ENCODE measurements at regions of chr10 and their contacts with region 1.

Region 1: GRCh38 chr10:93916257-93917063 is 22.7 kb downstream of the SLC35G1 start:
- DNase-seq: no peak
- ATAC-seq: peak; percentile 61
- H3K4me3 Mint-ChIP-seq: peak overlapping the region; percentile 41
- H3K27ac Mint-ChIP-seq: no peak overlapping the region
- H3K4me1 Mint-ChIP-seq: peaks cover 11% of the 10 kb centered on the region
- H3K27me3 Mint-ChIP-seq: no peaks in the 10 kb centered on the region
- CTCF ChIP-seq: no peak

Region 2: DNA sequence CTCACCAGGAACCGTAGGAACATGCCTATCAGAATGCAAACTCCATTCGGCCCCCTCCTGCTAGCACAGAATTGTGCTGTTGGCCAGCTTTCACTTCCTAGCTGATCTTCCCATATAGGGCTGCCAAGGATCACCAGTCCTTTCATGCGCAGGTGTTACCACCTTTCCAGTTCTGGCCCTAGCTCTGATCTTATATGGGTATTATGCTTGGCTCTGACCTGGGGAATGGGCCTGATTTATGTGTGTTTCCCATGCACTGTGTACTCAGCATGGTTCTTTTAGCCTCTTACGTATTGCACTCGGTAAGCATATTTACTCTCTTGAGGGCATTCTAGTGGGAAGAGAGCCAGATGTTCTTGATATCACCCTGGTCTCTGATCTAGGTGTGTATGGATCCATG is 11.6 kb before region 1 on chr10:
- CTCF ChIA-PET with region 1: interaction called, 22 read pairs
- POLR2A ChIA-PET with region 1: no interaction called
- DNase-seq: no peak
- ATAC-seq: no peak
- H3K4me3 Mint-ChIP-seq: no peak overlapping the region
- H3K27ac Mint-ChIP-seq: no peak overlapping the region
- H3K4me1 Mint-ChIP-seq: no peaks in the 10 kb centered on the region
- H3K27me3 Mint-ChIP-seq: no peaks in the 10 kb centered on the region
- CTCF ChIP-seq: no peak

Region 3: DNA sequence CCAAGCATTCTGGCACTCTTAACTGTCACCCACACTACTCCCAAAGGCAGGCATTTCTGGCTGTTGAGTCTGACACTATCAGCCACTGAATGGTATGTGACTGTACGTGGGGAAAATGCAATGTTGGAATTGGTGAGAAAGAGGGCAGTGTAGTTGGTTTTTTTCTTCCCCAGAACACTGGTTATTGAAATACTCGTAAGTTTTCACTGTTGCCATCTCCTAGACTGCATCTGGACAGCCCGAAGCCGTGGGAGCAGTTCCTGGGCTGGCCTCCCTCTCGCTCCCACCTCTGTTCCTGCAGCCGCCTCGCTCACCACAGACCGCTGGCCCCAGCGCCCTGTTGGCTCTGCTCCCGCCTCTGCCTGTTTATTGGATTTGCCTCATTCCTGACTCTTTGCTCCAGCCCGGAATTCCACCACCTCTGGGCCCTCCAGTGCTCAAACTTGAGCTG is 83.0 kb after region 1 on chr10:
- CTCF ChIA-PET with region 1: no interaction called
- POLR2A ChIA-PET with region 1: no interaction called
- DNase-seq: peak; percentile 32
- ATAC-seq: peak; percentile 72
- H3K4me3 Mint-ChIP-seq: no peak overlapping the region
- H3K27ac Mint-ChIP-seq: no peak overlapping the region
- H3K4me1 Mint-ChIP-seq: 0 out of 2 replicates have a peak, but pooled peaks cover 2% of the 10 kb centered on the region
- H3K27me3 Mint-ChIP-seq: peaks cover 47% of the 10 kb centered on the region
- CTCF ChIP-seq: no peak

Region 4: GRCh38 chr10:94085766-94086437 is 169.4 kb after region 1 on chr10:
- CTCF ChIA-PET with region 1: no interaction called
- POLR2A ChIA-PET with region 1: no interaction called
- DNase-seq: no peak
- ATAC-seq: no peak
- H3K4me3 Mint-ChIP-seq: no peak overlapping the region
- H3K27ac Mint-ChIP-seq: no peak overlapping the region
- H3K4me1 Mint-ChIP-seq: peaks cover 4% of the 10 kb centered on the region; the same call in 1 of the 2 replicates
- H3K27me3 Mint-ChIP-seq: no peaks in the 10 kb centered on the region
- CTCF ChIP-seq: no peak

Region 5: GRCh38 chr10:94225589-94225988 is 309.1 kb after region 1 on chr10:
- CTCF ChIA-PET with region 1: interaction called, 17 read pairs
- POLR2A ChIA-PET with region 1: no interaction called
- DNase-seq: peak; percentile 23
- ATAC-seq: peak; percentile 26; the same call in 1 of the 2 replicates
- H3K4me3 Mint-ChIP-seq: no peak overlapping the region
- H3K27ac Mint-ChIP-seq: no peak overlapping the region
- H3K4me1 Mint-ChIP-seq: peaks cover 7% of the 10 kb centered on the region
- H3K27me3 Mint-ChIP-seq: no peaks in the 10 kb centered on the region; the same call in 1 of the 2 replicates
- CTCF ChIP-seq: no peak